Thyroid gland (tissue), 4 donors: ENCODE measurements at regions of chr18 and their contacts with region 1.

Region 1: GRCh38 chr18:35756506-35757117 is 175.1 kb downstream of the GALNT1 start:
- DNase-seq: peak; percentile 35 to 47
- H3K4me3 ChIP-seq: no peak overlapping the region
- H3K27ac ChIP-seq: no peak overlapping the region
- H3K4me1 ChIP-seq: no peaks in the 10 kb centered on the region
- H3K27me3 ChIP-seq: no peaks in the 10 kb centered on the region
- CTCF ChIP-seq: peak; percentile 40 to 79 (median 66)
- POLR2A ChIP-seq: no peak

Region 2: DNA sequence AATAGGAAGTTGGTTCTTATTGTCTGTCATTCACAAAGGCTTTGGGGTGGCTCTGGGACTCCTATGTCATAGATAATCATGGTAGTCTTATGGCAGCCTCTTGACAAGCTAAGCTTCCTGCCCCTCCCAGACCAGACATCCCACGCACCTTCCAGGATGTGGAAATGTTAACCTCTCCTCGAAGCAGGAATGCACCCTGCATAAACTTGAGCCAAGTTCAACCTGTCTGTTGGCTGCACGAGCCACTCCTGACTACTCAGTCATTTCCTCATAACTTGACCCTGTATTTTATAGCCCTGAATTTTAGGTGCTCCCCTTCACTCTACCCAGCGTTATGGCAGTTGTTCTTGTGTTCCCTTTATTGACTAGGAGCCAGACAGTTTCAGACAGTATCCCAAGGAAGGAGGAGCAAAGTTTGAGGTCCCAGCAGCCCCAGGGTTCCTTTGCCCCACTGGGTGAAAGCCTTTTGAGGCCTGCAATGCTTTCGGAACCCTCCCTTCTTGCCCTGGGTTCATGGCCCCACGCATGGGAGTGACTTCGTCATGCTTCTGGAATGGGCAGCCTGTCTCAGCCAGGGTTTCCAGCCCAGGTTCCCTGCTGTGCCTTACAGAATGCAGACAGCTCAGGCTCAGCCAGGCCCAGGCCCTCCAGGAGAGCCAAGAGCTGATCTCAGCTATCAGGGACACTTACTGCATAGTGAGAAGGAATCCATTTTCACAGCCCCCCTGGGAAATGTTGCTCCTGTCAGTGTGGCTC is 243.3 kb before region 1 on chr18:
- intact Hi-C with region 1: no loop called
- DNase-seq: peak; percentile 44 to 50
- H3K4me3 ChIP-seq: no peak overlapping the region
- H3K27ac ChIP-seq: peak overlapping the region in 1 of 3 donors; percentile 33
- H3K4me1 ChIP-seq: peaks cover 7 to 10% of the 10 kb centered on the region in 2 donors
- H3K27me3 ChIP-seq: no peaks in the 10 kb centered on the region
- CTCF ChIP-seq: no peak
- POLR2A ChIP-seq: no peak

Region 3: GRCh38 chr18:35949903-35950627 is 193.5 kb after region 1 on chr18:
- intact Hi-C with region 1: loop called (anchors 5 kb)
- DNase-seq: peak; percentile 36 to 46
- H3K4me3 ChIP-seq: peak overlapping the region in 2 of 3 donors; percentile 43 to 55
- H3K27ac ChIP-seq: no peak overlapping the region
- H3K4me1 ChIP-seq: peaks cover 0 to 6% of the 10 kb centered on the region in 2 donors
- H3K27me3 ChIP-seq: no peaks in the 10 kb centered on the region
- CTCF ChIP-seq: peak; percentile 70 to 97 (median 84)
- POLR2A ChIP-seq: no peak